Natural killer cell (primary cell): ENCODE measurements at regions of chrX and their contacts with region 1.

Region 1: GRCh38 chrX:148380650-148381561 is 119.5 kb upstream of the AFF2 start:
- DNase-seq: peak; percentile 16 to 70
- ATAC-seq: peak; percentile 84 to 92 (median 86)
- H3K4me3 ChIP-seq: peak overlapping the region; percentile 9
- H3K4me3 Mint-ChIP-seq: peak overlapping the region; percentile 81
- H3K27ac ChIP-seq: peak overlapping the region; percentile 95
- H3K27ac Mint-ChIP-seq: peak overlapping the region; percentile 90 to 92
- H3K4me1 ChIP-seq: peaks cover 16% of the 10 kb centered on the region
- H3K4me1 Mint-ChIP-seq: peaks cover 16 to 30% of the 10 kb centered on the region in 2 donors
- H3K27me3 ChIP-seq: no peaks in the 10 kb centered on the region
- H3K27me3 Mint-ChIP-seq: no peaks in the 10 kb centered on the region
- CTCF ChIP-seq: no peak

Region 2: GRCh38 chrX:147911192-147912022 is 469.5 kb before region 1 on chrX and contains the start of gene FMR1:
- intact Hi-C with region 1: loop called (anchors 5 kb)
- DNase-seq: peak; percentile 88 to 96
- ATAC-seq: peak; percentile 87 to 93 (median 89)
- H3K4me3 ChIP-seq: peak within 1 kb of the TSS; percentile 99
- H3K4me3 Mint-ChIP-seq: peak within 1 kb of the TSS; percentile 95
- H3K27ac ChIP-seq: peak within 1 kb of the TSS; percentile 97
- H3K27ac Mint-ChIP-seq: peak within 1 kb of the TSS; percentile 87 to 96
- H3K4me1 ChIP-seq: peaks cover 10% of the 10 kb centered on the region
- H3K4me1 Mint-ChIP-seq: peaks cover 28 to 31% of the 10 kb centered on the region in 2 donors
- H3K27me3 ChIP-seq: no peaks in the 10 kb centered on the region
- H3K27me3 Mint-ChIP-seq: no peaks in the 10 kb centered on the region
- CTCF ChIP-seq: no peak
- total RNA-seq, gene FMR1: 124 to 147 (median 127) TPM